ENCODE measurements at regions of chr2 and their contacts with region 1.

Region 1: DNA sequence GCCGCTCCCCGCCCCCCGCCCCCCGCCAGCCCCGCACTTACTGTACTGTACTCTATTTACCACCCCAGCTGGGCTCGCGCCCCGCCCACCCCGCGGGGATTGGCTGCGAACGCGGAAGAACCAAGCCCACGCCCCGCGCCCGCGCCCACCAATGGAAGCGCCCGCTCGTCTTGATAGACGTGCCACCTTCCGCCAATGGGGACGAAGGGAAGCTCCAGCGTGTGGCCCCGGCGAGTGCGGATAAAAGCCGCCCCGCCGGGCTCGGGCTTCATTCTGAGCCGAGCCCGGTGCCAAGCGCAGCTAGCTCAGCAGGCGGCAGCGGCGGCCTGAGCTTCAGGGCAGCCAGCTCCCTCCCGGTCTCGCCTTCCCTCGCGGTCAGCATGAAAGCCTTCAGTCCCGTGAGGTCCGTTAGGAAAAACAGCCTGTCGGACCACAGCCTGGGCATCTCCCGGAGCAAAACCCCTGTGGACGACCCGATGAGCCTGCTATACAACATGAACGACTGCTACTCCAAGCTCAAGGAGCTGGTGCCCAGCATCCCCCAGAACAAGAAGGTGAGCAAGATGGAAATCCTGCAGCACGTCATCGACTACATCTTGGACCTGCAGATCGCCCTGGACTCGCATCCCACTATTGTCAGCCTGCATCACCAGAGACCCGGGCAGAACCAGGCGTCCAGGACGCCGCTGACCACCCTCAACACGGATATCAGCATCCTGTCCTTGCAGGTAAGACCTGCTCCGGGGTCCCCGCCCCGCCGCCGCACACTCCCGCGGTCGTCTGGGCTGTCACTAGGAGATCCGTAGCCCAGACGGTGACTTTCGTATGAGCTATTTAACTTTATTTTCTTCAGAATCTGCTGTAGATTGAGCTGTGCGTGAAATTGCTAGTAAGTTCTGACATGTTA is at the start of gene ID2:
- DNase-seq: no peak
- ATAC-seq: peak; percentile 74
- H3K4me3 ChIP-seq: peak within 1 kb of the TSS; percentile 71 to 88
- H3K27ac ChIP-seq: peak within 1 kb of the TSS; percentile 89
- H3K4me1 ChIP-seq: peaks cover 35% of the 10 kb centered on the region
- H3K27me3 ChIP-seq: no peaks in the 10 kb centered on the region; the same call in 1 of the 2 replicates
- CTCF ChIP-seq: no peak
- total RNA-seq, gene ID2: 2.1 TPM

Region 2: GRCh38 chr2:7118606-7119503 is 1563.2 kb before region 1 on chr2:
- CTCF ChIA-PET with region 1: no interaction called
- POLR2A ChIA-PET with region 1: no interaction called
- in situ Hi-C with region 1: no loop called
- intact Hi-C with region 1: loop called (anchors 10 kb)
- DNase-seq: no peak
- ATAC-seq: peak; percentile 69; the same call in 1 of the 2 replicates
- H3K4me3 ChIP-seq: no peak overlapping the region
- H3K27ac ChIP-seq: no peak overlapping the region
- H3K4me1 ChIP-seq: no peaks in the 10 kb centered on the region
- H3K27me3 ChIP-seq: no peaks in the 10 kb centered on the region
- CTCF ChIP-seq: peak; percentile 67

Region 3: DNA sequence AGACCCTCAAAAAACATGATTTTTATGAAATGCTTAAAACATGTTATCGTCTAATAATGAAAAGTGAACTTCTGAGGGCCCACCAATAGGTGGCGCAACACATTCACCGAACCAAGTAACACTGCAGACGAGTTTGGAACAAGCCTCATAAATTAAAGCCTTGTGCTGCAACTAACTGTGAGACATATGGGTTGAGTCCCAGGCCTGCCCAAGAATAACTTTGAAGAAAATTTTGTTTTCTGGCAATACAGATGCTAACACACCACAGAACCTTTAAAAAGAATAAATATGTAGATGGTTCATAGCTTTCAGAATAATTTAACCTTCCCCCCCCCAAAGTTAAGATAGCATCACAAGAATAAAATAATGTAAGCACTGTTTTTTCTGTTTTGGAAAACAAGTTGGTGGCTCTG is 1479.0 kb before region 1 on chr2:
- CTCF ChIA-PET with region 1: no interaction called
- POLR2A ChIA-PET with region 1: no interaction called
- in situ Hi-C with region 1: no loop called
- intact Hi-C with region 1: loop called (anchors 5 kb)
- DNase-seq: peak; percentile 15
- ATAC-seq: peak; percentile 53; the same call in 1 of the 2 replicates
- H3K4me3 ChIP-seq: no peak overlapping the region
- H3K27ac ChIP-seq: no peak overlapping the region
- H3K4me1 ChIP-seq: no peaks in the 10 kb centered on the region
- H3K27me3 ChIP-seq: no peaks in the 10 kb centered on the region
- CTCF ChIP-seq: peak; percentile 93

Region 4: GRCh38 chr2:7427293-7428060 is 1254.6 kb before region 1 on chr2:
- CTCF ChIA-PET with region 1: interaction called, 5 read pairs
- POLR2A ChIA-PET with region 1: no interaction called
- in situ Hi-C with region 1: no loop called
- intact Hi-C with region 1: loop called (anchors 5 kb)
- DNase-seq: peak; percentile 30
- ATAC-seq: 0 out of 2 replicates have a peak, but pooled peaks have one; percentile 60
- H3K4me3 ChIP-seq: no peak overlapping the region
- H3K27ac ChIP-seq: no peak overlapping the region
- H3K4me1 ChIP-seq: no peaks in the 10 kb centered on the region
- H3K27me3 ChIP-seq: peaks cover 7% of the 10 kb centered on the region
- CTCF ChIP-seq: peak; percentile 68

Region 5: GRCh38 chr2:8152392-8153257 is 529.4 kb before region 1 on chr2:
- CTCF ChIA-PET with region 1: no interaction called
- POLR2A ChIA-PET with region 1: no interaction called
- in situ Hi-C with region 1: no loop called
- intact Hi-C with region 1: loop called (anchors 10 kb)
- DNase-seq: no peak
- ATAC-seq: no peak
- H3K4me3 ChIP-seq: no peak overlapping the region
- H3K27ac ChIP-seq: no peak overlapping the region
- H3K4me1 ChIP-seq: no peaks in the 10 kb centered on the region
- H3K27me3 ChIP-seq: no peaks in the 10 kb centered on the region
- CTCF ChIP-seq: no peak

Region 6: GRCh38 chr2:8252997-8253694 is 428.9 kb before region 1 on chr2:
- CTCF ChIA-PET with region 1: no interaction called
- POLR2A ChIA-PET with region 1: interaction called, 19 read pairs
- in situ Hi-C with region 1: no loop called
- intact Hi-C with region 1: no loop called
- DNase-seq: no peak
- ATAC-seq: no peak
- H3K4me3 ChIP-seq: no peak overlapping the region
- H3K27ac ChIP-seq: no peak overlapping the region
- H3K4me1 ChIP-seq: no peaks in the 10 kb centered on the region
- H3K27me3 ChIP-seq: no peaks in the 10 kb centered on the region
- CTCF ChIP-seq: no peak